CD4-positive, alpha-beta T cell (primary cell): ENCODE measurements at regions of chr15 and their contacts with region 1.

Region 1: DNA sequence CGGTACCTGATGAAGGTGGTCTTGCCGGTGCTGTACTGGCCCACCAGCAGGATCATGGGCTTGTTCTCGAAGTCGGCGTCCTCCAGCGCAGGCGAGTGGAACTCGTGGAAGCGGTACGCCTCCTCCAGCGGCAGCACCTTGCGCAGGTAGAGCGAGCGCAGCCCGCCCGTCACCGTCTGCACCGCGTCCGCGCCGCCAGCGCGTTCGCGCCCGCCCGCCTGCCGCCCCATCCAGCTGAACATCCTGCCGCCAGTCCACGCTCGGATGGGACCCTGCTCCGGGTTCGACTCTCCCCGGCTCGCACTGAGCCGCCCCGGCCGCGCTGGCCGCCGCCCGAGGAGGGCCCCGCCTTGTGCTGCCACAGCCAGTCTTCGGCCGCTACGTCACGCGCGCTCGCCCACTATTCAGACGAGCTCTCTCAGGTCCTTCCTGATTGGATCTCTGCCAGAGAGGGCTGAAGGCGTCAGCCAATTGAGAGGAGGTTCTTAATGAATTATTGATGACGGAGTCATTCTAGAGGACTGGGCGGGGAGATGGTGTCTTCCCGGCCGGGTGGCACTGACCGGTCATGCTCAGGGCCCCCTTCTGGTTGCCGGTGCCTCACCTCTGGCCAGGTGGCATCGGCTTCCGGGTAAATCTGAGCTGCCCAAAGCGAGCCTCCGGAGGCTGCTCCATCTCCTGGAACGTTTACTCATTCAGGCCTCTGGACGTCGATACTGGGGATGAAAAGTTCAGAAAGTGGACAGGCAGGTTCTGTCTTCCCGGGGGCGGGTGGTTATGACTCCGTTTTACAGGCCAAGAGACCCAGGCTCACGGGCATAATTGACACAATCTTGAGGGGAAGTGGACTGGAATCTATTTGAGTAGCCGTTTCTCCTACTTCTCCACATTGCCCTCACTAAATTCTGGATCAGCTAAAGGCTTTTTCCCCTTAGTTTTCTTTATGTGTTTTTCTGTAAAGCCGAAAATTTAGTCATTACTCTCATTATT is at the start of gene EHD4:
- DNase-seq: peak; percentile 84 to 99 (median 90)
- ATAC-seq: peak; percentile 78
- H3K4me3 ChIP-seq: peak within 1 kb of the TSS; percentile 82
- H3K4me3 Mint-ChIP-seq: peak within 1 kb of the TSS; percentile 98
- H3K27ac ChIP-seq: peak within 1 kb of the TSS; percentile 61 to 81
- H3K27ac Mint-ChIP-seq: peak within 1 kb of the TSS; percentile 95
- H3K4me1 ChIP-seq: peaks cover 40% of the 10 kb centered on the region
- H3K4me1 Mint-ChIP-seq: peaks cover 46% of the 10 kb centered on the region
- H3K27me3 ChIP-seq: peaks cover 0 to 5% of the 10 kb centered on the region in 2 experiments
- H3K27me3 Mint-ChIP-seq: peaks cover 19% of the 10 kb centered on the region
- CTCF ChIP-seq: no peak
- total RNA-seq, gene EHD4: 39.8 to 40.5 TPM

Region 2: DNA sequence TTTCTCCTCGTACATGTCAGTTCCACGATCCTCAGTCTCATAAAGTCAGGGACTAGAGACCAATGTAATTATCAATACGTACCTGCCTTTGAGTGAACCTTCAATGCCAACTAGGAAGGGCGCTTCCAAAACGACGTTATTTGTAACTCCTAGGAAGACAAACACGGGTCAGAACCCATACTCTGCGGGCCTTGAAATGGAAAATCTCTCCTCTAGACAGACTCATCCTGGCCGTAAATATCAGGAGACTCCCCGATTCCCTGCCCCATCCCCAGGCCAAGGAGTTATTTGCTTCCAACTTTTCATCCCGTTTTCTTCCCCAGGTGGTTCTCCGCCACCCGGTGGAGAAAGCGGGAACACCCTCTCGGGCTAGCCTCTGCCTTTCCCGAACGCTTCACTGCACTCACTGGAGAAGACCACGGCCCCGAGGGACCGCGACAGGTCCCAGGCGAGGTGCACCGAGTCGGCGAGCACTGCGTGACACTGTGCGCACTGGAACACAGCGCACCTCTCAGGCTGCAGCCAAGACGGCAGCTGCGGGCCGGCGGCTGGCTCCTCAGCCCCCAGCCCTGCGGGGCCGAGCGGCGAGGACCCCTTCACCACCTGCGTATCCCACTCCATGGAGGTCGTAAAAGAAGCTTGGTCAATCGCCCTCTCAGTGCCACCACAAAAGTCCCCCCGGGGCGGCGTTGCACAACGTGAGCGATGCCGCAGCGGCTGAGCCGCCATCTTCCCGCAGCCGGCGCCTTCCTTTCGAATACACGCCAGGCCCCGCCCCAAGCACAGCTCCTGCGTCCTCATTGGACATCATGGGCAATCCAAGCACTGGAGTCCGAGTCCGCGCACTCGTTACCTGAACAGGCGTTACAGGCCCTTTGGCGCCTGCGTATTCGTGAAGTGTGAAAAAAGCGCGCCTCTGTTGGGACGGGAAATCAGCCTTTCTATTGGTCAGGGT is 640.4 kb before region 1 on chr15 and contains the start of gene OIP5:
- CTCF ChIA-PET with region 1: no interaction called
- POLR2A ChIA-PET with region 1: interaction called, 3 read pairs
- intact Hi-C with region 1: loop called in 1 of 2 experiments (anchors 10 kb)
- DNase-seq: peak; percentile 94 to 99 (median 97)
- ATAC-seq: peak; percentile 96
- H3K4me3 ChIP-seq: peak within 1 kb of the TSS; percentile 77
- H3K4me3 Mint-ChIP-seq: peak within 1 kb of the TSS; percentile 95
- H3K27ac ChIP-seq: peak within 1 kb of the TSS in 1 of 2 donors; percentile 38
- H3K27ac Mint-ChIP-seq: peak within 1 kb of the TSS; percentile 78
- H3K4me1 ChIP-seq: peaks cover 21% of the 10 kb centered on the region
- H3K4me1 Mint-ChIP-seq: peaks cover 19% of the 10 kb centered on the region
- H3K27me3 ChIP-seq: no peaks in the 10 kb centered on the region
- H3K27me3 Mint-ChIP-seq: no peaks in the 10 kb centered on the region
- CTCF ChIP-seq: peak; percentile 58
- total RNA-seq, gene OIP5: 0.20 to 0.36 TPM

Region 3: DNA sequence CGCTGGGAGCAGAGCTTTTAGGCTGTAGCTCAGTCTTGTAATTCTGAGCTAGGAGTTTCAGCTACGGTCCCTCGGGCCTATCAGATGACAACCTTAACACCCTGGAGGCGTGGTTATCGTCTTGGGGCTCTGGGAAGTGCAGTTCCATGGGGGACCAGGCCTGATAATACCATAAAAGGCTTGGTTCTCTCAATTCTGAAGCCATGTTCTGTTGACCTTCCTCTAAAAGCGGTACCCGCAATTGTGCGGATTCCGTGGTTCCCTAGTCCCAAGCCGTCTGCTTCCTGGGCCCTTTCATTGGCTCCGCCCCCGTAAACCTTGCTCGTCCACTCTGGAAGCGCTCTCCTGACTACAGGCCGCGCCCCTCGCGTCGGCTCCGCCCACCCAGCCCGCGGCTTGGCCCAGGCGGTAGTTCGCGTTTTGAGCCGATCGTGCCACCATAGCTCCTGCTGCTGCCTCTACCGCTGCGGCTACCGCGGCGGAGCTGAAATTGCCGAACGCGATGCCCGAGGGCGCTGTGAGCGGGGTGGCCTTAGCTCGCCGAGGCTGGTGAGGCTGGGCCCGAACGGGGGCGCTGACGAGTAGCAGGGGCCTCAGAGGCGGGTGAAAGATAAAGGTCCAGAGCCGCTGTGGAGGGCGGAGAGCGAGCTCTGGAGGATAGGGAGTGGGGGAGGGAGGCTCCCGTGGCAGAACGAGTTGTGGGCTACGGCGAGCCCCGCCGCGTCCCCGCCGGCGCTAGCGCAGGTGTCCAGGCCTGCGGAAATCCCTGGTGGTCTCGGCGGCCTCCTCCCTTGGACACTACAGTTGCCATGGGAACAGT is 198.3 kb before region 1 on chr15 and contains the start of gene MAPKBP1:
- CTCF ChIA-PET with region 1: interaction called, 4 read pairs
- POLR2A ChIA-PET with region 1: interaction called, 20 read pairs
- intact Hi-C with region 1: no loop called
- DNase-seq: peak; percentile 92 to 99 (median 97)
- ATAC-seq: peak; percentile 88
- H3K4me3 ChIP-seq: peak within 1 kb of the TSS; percentile 89
- H3K4me3 Mint-ChIP-seq: peak within 1 kb of the TSS; percentile 96
- H3K27ac ChIP-seq: peak within 1 kb of the TSS; percentile 57 to 72
- H3K27ac Mint-ChIP-seq: peak within 1 kb of the TSS; percentile 83
- H3K4me1 ChIP-seq: peaks cover 46% of the 10 kb centered on the region
- H3K4me1 Mint-ChIP-seq: peaks cover 65% of the 10 kb centered on the region
- H3K27me3 ChIP-seq: no peaks in the 10 kb centered on the region
- H3K27me3 Mint-ChIP-seq: no peaks in the 10 kb centered on the region
- CTCF ChIP-seq: peak; percentile 70
- total RNA-seq, gene MAPKBP1: 26.0 to 30.0 TPM

Region 4: DNA sequence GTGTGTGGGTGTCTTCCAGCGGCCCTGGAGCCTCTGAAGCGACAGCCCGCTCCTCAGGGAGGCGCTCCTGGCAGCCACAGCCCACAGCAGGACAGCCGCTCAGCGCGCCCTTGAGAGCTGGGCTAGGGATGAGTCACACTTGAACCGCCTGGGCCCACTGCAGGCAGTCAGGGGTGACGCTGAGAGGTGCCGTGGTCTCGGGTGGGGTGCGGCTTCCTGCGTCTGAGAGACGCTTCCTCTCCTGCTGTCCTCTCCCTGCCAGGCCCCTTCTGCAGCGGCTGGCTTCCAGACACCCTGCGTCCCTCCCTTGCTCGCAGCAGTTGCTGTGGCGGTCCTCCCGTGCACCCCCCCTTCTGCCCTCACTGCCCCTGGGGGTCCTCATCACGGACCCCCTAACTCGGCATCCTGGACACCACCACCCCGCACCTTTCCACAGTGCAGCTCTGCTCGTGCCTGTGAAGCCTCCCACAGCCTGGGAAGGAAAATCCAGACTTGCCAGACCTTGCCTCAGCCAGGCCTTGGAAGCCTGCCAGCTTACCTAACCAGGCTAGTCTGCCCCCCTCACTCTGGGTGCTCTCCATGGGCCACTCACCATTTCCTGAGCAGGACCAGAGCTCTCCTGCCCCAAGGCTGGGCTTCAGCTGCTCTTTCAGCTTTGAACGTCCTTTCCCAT is 77.6 kb before region 1 on chr15:
- CTCF ChIA-PET with region 1: interaction called, 11 read pairs
- POLR2A ChIA-PET with region 1: interaction called, 10 read pairs
- intact Hi-C with region 1: no loop called
- DNase-seq: peak; percentile 79 to 95 (median 90)
- ATAC-seq: peak; percentile 93
- H3K4me3 ChIP-seq: peak overlapping the region; percentile 36
- H3K4me3 Mint-ChIP-seq: peak overlapping the region; percentile 83
- H3K27ac ChIP-seq: peak overlapping the region; percentile 85 to 92
- H3K27ac Mint-ChIP-seq: peak overlapping the region; percentile 100
- H3K4me1 ChIP-seq: peaks cover 52% of the 10 kb centered on the region
- H3K4me1 Mint-ChIP-seq: peaks cover 58% of the 10 kb centered on the region
- H3K27me3 ChIP-seq: no peaks in the 10 kb centered on the region
- H3K27me3 Mint-ChIP-seq: no peaks in the 10 kb centered on the region
- CTCF ChIP-seq: no peak

Region 5: GRCh38 chr15:42736793-42737528 is 764.4 kb after region 1 on chr15 and contains the start of gene CDAN1:
- CTCF ChIA-PET with region 1: no interaction called
- POLR2A ChIA-PET with region 1: no interaction called
- intact Hi-C with region 1: loop called in 1 of 2 experiments (anchors 5 kb)
- DNase-seq: peak; percentile 84 to 97 (median 92)
- ATAC-seq: peak; percentile 91
- H3K4me3 ChIP-seq: peak within 1 kb of the TSS; percentile 65
- H3K4me3 Mint-ChIP-seq: peak within 1 kb of the TSS; percentile 93
- H3K27ac ChIP-seq: peak within 1 kb of the TSS; percentile 64 to 69
- H3K27ac Mint-ChIP-seq: peak within 1 kb of the TSS; percentile 88
- H3K4me1 ChIP-seq: peaks cover 25% of the 10 kb centered on the region
- H3K4me1 Mint-ChIP-seq: peaks cover 18% of the 10 kb centered on the region
- H3K27me3 ChIP-seq: no peaks in the 10 kb centered on the region
- H3K27me3 Mint-ChIP-seq: no peaks in the 10 kb centered on the region
- CTCF ChIP-seq: no peak
- total RNA-seq, gene CDAN1: 23.2 to 24.7 TPM